ENCODE measurements at regions of chr19 and their contacts with region 1.

Region 1: DNA sequence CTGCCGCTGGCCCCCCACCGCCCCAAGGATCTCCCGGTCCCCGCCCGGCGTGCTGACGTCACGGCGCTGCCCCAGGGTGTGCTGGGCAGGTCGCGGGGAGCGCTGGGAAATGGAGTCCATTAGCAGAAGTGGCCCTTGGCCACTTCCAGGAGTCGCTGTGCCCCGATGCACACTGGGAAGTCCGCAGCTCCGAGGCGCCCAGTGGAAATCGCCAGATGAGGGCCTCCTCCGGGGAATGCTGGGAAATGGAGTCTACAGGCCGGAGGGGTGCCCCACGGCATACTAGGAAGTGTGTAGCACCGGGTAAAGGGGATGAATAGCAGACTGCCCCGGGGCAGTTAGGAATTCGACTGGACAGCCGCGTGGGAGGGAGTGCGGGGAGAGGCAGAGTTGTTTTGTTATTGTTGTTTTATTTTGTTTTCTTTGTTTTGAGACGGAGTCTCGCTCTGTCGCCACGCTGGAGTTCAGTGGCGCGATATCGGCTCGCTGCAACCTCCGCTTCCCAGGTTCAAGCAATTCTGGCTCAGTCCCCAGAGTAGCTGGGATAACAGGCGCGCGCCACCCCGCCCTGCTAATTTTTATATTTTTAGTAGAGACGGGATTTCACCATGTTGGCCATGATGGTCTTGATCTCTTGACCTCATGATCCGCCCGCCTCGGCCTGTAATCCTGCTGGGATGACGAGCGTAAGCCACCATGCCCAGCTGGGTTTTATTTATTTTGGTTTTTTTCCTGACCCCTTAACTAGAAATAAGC is at the start of gene PPP1R12C:
- DNase-seq: peak; percentile 99
- ATAC-seq: peak; percentile 96
- H3K4me3 Mint-ChIP-seq: peak within 1 kb of the TSS; percentile 95
- H3K27ac Mint-ChIP-seq: peak within 1 kb of the TSS; percentile 97
- H3K4me1 Mint-ChIP-seq: peaks cover 24% of the 10 kb centered on the region
- H3K27me3 Mint-ChIP-seq: peaks cover 2% of the 10 kb centered on the region
- total RNA-seq, gene PPP1R12C: 66.1 to 69.8 TPM

Region 2: DNA sequence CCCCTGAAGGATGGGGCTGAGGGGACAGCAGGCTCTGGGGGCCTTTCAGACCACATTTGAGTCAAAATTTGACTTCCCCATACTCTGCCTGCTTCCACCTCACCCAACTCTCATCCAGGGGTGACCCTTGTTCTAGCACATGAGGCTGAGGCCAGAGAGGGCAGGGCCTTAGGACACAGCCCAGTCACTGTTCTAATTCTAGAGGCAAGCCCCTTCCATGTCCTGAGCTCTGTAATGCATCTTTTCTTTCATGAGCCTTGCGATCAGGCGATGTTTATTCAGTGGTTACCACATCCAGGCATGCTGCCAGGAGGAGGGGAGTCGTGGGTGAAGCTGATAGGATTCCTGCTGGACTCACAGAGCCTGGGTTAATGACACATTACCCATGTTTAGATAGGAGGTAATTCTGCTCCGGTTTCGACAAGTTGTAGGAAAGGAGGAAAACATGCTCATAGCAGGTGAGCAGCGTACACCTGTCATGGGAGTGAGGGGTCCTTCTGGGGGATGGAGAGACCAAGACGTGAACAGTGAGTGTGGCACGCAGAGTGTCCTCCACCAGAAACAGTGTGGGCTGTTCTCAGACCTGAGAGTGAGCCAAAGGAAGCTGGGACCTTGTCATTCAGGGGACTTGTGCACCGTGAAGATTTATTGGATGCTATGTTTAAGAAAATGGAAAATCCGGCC is 907.9 kb before region 1 on chr19:
- CTCF ChIA-PET with region 1: no interaction called
- POLR2A ChIA-PET with region 1: no interaction called
- intact Hi-C with region 1: no loop called
- DNase-seq: peak; percentile 48
- ATAC-seq: no peak
- H3K4me3 Mint-ChIP-seq: peak overlapping the region; percentile 4
- H3K27ac Mint-ChIP-seq: peak overlapping the region; percentile 59
- H3K4me1 Mint-ChIP-seq: peaks cover 64% of the 10 kb centered on the region
- H3K27me3 Mint-ChIP-seq: no peaks in the 10 kb centered on the region

Region 3: GRCh38 chr19:55005684-55006488 is 111.9 kb before region 1 on chr19:
- CTCF ChIA-PET with region 1: no interaction called
- POLR2A ChIA-PET with region 1: no interaction called
- intact Hi-C with region 1: loop called in 1 of 2 experiments (anchors 1 kb)
- DNase-seq: peak; percentile 65
- ATAC-seq: peak; percentile 86
- H3K4me3 Mint-ChIP-seq: peak overlapping the region; percentile 82
- H3K27ac Mint-ChIP-seq: peak overlapping the region; percentile 94
- H3K4me1 Mint-ChIP-seq: peaks cover 25% of the 10 kb centered on the region
- H3K27me3 Mint-ChIP-seq: peaks cover 13% of the 10 kb centered on the region

Region 4: GRCh38 chr19:55160128-55160985 is 42.5 kb after region 1 on chr19:
- CTCF ChIA-PET with region 1: no interaction called
- POLR2A ChIA-PET with region 1: no interaction called
- intact Hi-C with region 1: loop called in 1 of 2 experiments (anchors 1 kb)
- DNase-seq: peak; percentile 96
- ATAC-seq: peak; percentile 98
- H3K4me3 Mint-ChIP-seq: no peak overlapping the region
- H3K27ac Mint-ChIP-seq: no peak overlapping the region
- H3K4me1 Mint-ChIP-seq: peaks cover 9% of the 10 kb centered on the region
- H3K27me3 Mint-ChIP-seq: peaks cover 23% of the 10 kb centered on the region

Region 5: DNA sequence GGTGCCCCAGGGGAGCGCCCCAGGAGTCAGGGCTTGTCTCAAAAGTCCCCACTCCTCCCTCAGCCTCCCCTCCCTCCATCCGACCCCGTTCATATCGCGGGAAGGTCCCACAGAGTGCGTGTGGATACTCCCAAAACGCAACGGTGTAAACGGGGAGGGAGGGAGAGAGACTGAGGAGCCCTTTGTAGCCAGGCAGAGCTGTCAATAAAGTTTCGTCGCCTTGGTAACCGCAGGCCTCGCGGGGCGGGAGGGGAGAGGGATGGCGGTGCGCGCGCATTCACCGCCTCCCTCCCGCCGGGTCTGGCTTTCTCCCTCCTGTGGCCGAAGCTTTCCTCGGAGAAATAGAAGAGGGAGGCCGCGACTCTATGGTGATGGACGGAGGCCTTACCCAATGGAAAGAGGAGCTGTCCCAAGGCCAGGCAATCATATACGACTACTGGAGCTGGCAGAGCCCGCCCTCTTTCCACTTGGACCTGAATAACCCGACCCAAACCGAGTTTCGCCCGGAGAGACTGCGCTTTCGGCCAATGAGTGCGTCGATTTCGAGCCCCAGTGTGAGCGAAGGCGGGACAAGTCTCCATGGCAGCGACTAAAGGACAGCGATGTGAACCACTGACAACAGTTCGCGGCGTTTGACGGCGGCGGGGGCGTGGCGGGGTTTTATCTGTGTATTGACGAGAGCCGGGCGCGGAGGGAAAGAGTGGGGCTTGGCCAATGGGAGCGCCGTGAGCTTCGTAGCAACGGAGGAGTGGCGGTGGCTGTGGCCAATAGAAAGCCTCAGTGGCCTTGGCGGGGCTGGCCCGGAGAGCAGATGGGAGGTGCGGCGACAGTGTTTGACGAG is 221.5 kb after region 1 on chr19 and contains the start of gene KMT5C:
- CTCF ChIA-PET with region 1: interaction called, 3 read pairs
- POLR2A ChIA-PET with region 1: interaction called, 6 read pairs
- intact Hi-C with region 1: loop called in 1 of 2 experiments (anchors 1 kb)
- DNase-seq: peak; percentile 100
- ATAC-seq: peak; percentile 86
- H3K4me3 Mint-ChIP-seq: peak within 1 kb of the TSS; percentile 86
- H3K27ac Mint-ChIP-seq: peak within 1 kb of the TSS; percentile 97
- H3K4me1 Mint-ChIP-seq: peaks cover 18% of the 10 kb centered on the region
- H3K27me3 Mint-ChIP-seq: peaks cover 2% of the 10 kb centered on the region
- total RNA-seq, gene KMT5C: 27.5 to 32.3 TPM

Region 6: GRCh38 chr19:55476100-55476775 is 358.4 kb after region 1 on chr19 and contains the start of gene ZNF628:
- CTCF ChIA-PET with region 1: no interaction called
- POLR2A ChIA-PET with region 1: interaction called, 3 read pairs
- intact Hi-C with region 1: loop called in 1 of 2 experiments (anchors 1 kb)
- DNase-seq: peak; percentile 99
- ATAC-seq: peak; percentile 96
- H3K4me3 Mint-ChIP-seq: peak within 1 kb of the TSS; percentile 84
- H3K27ac Mint-ChIP-seq: peak within 1 kb of the TSS; percentile 88
- H3K4me1 Mint-ChIP-seq: peaks cover 32% of the 10 kb centered on the region
- H3K27me3 Mint-ChIP-seq: no peaks in the 10 kb centered on the region
- total RNA-seq, gene ZNF628: 5.6 to 6.8 TPM

Region 7: DNA sequence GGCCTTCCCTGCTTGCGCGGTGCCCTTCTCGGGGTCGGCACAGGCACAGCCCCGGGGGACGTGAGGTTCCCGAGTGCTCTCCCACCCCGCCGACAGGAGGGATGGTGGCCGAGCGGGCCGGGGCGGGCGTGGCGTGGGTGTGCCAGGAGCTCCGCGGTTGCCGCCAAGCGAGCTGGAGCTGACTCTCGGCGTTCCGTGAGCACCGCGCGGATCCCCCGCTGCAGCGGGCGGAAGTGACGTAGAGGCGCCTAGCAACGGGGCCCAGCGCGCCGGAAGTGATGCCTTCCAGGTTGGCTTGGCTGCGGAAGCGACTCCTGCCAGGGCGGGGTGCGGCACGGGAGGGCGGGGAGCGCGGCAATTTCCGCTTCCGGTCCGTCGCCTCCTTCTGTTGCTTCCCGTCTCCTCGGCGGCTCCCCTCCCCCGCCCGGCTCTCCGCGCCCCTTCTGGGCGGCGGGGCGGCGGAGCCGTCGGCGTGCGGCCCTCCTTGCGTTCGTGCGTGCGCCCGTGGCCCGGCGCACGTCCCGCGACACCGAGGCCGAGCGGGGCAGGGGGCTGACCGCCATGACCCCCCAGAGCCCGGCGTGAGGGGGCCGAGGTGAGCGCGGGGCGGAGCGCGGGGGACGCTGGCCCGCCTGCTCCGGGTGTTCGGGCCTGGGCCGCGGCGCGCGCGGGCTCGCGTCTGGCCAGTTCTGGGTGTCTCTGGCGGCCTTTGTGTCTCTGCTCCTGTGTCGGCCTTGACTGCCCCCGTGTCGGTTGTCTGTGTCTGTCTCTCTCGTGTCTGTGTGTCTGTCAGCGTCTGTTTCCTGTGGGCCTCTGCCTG is 557.2 kb after region 1 on chr19 and contains the start of gene EPN1:
- CTCF ChIA-PET with region 1: interaction called, 3 read pairs
- POLR2A ChIA-PET with region 1: no interaction called
- intact Hi-C with region 1: loop called in 1 of 2 experiments (anchors 1 kb)
- DNase-seq: peak; percentile 99
- ATAC-seq: peak; percentile 91
- H3K4me3 Mint-ChIP-seq: peak within 1 kb of the TSS; percentile 95
- H3K27ac Mint-ChIP-seq: peak within 1 kb of the TSS; percentile 96
- H3K4me1 Mint-ChIP-seq: peaks cover 63% of the 10 kb centered on the region
- H3K27me3 Mint-ChIP-seq: no peaks in the 10 kb centered on the region
- total RNA-seq, gene EPN1: 32.5 to 37.1 TPM

Region 8: GRCh38 chr19:56105090-56105701 is 987.4 kb after region 1 on chr19:
- CTCF ChIA-PET with region 1: no interaction called
- POLR2A ChIA-PET with region 1: no interaction called
- intact Hi-C with region 1: no loop called
- DNase-seq: peak; percentile 74
- ATAC-seq: peak; percentile 82
- H3K4me3 Mint-ChIP-seq: no peak overlapping the region
- H3K27ac Mint-ChIP-seq: peak overlapping the region; percentile 25
- H3K4me1 Mint-ChIP-seq: peaks cover 27% of the 10 kb centered on the region
- H3K27me3 Mint-ChIP-seq: no peaks in the 10 kb centered on the region

Measured in activated CD4-positive, alpha-beta T cell treated with anti-CD3 and anti-CD28 coated beads for 36 hours (primary cell).